ENCODE measurements at regions of chr2 and their contacts with region 1.

Region 1: GRCh38 chr2:172985139-172985901 is 90.3 kb upstream of the MAP3K20 start:
- DNase-seq: peak; percentile 83
- H3K4me3 Mint-ChIP-seq: peak overlapping the region; percentile 65
- H3K27ac Mint-ChIP-seq: peak overlapping the region; percentile 64
- H3K4me1 Mint-ChIP-seq: peaks cover 13% of the 10 kb centered on the region
- H3K27me3 Mint-ChIP-seq: peaks cover 5% of the 10 kb centered on the region
- CTCF ChIP-seq: no peak

Region 2: GRCh38 chr2:172836386-172836821 is 148.9 kb before region 1 on chr2:
- CTCF ChIA-PET with region 1: no interaction called
- POLR2A ChIA-PET with region 1: no interaction called
- intact Hi-C with region 1: no loop called
- DNase-seq: peak; percentile 81
- H3K4me3 Mint-ChIP-seq: peak overlapping the region; percentile 20
- H3K27ac Mint-ChIP-seq: peak overlapping the region; percentile 75
- H3K4me1 Mint-ChIP-seq: peaks cover 15% of the 10 kb centered on the region
- H3K27me3 Mint-ChIP-seq: no peaks in the 10 kb centered on the region
- CTCF ChIP-seq: no peak

Region 3: DNA sequence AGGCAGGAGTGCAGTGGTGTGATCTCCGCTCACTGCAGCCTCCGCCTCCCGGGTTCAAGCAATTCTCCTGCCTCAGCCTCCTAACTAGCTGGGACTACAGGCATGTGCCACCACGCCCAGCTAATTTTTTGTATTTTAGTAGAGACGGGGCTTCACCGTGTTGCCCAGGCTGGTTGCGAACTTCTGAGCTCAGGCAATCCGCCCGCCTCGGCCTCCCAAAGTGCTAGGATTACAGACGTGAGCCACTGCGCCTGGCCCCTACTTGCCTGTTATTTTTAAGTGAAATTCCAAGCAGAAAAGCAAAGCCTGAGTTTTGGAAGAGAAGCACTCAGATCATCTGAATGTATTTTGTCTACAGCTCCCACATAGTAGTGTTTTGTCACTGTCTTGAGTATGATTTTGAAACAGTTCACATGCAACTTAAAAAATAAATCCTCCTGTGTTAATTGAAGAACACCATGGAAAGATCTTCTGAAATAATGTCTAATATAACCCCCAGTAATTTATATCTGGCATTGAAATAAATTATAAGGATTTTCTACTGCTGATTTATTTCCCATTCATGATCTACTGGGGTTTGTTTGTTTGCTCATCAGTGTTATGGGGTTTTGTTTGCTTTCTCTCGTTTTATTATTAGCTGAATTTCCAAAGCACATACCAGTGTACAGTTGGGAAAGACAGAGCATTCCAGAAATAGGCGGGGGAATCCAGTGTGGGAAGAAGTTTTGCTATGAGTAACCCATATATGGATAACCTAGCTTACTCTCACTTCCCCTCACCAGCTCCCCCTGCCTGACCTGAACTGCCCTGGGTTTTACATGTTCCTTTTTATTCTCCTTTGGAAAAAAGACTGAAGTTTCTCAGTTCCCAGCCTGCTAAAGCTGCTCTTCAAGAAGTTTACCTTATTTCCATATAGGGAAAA is 10.3 kb after region 1 on chr2:
- CTCF ChIA-PET with region 1: interaction called, 21 read pairs
- POLR2A ChIA-PET with region 1: interaction called, 8 read pairs
- intact Hi-C with region 1: no loop called
- DNase-seq: peak; percentile 84
- H3K4me3 Mint-ChIP-seq: no peak overlapping the region
- H3K27ac Mint-ChIP-seq: peak overlapping the region; percentile 83
- H3K4me1 Mint-ChIP-seq: peaks cover 19% of the 10 kb centered on the region
- H3K27me3 Mint-ChIP-seq: no peaks in the 10 kb centered on the region
- CTCF ChIP-seq: no peak

Measured in MCF 10A (cell line).